ENCODE measurements at regions of chr7 and their contacts with region 1.

Region 1: DNA sequence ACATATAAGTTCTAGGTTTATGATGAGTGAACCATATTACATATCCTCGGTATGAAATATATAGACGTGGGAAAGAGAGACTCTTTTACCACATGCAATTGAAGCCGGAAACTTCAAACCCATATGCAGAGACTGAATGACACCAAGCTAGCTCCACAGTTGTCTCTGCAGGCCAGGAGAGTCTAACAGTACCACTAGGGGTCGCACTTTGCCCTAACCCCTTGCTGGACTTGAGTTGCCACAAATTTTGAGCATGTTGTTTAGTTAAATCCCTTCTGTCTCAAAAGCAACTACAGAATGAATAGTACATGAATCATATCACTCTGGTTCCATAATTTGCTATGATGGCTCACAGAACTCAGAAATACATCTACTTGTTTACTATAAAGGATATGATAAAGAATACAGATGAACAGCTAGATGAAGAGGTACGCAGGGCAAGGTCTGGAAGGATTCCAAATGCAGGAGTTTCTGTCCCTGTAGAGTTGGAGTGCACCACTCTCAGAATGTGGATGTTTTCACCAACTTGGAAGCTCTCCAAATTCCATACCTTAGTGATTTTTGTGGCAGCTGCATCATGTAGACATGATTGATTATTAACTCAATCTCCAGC is 112.4 kb upstream of the YAE1 start:
- DNase-seq: peak; percentile 62
- H3K4me3 Mint-ChIP-seq: no peak overlapping the region
- H3K27ac Mint-ChIP-seq: no peak overlapping the region
- H3K4me1 Mint-ChIP-seq: no peaks in the 10 kb centered on the region
- H3K27me3 Mint-ChIP-seq: peaks cover 11% of the 10 kb centered on the region

Region 2: DNA sequence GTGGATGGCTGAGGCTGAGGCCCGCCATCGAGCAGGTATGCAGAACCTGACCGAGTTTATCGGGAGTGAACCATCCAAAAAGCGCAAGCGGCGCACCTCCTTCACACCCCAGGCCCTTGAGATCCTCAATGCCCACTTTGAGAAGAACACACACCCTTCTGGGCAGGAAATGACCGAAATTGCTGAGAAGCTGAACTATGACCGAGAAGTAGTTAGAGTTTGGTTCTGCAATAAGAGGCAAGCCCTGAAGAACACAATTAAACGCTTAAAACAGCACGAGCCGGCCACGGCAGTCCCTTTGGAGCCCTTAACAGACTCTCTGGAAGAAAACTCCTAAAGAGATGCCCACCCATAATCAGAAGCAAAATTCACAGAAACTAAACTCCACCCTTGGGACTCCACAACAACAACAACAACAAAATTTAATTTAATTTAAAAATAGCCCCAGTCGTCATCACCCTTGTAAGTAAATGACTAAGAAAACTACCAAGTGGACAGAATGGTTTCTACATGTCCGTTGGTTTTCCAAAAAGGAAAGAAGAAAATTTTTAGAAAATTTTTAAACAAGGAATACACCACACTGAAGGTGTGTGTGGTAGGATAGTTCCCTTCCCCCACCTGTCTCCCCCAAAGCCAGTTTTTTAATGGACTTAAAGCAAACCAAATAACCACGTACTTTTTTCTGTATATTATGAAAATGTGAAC is 10.7 kb after region 1 on chr7:
- CTCF ChIA-PET with region 1: interaction called, 22 read pairs
- POLR2A ChIA-PET with region 1: interaction called, 3 read pairs
- DNase-seq: no peak
- H3K4me3 Mint-ChIP-seq: no peak overlapping the region
- H3K27ac Mint-ChIP-seq: no peak overlapping the region
- H3K4me1 Mint-ChIP-seq: peaks cover 8% of the 10 kb centered on the region
- H3K27me3 Mint-ChIP-seq: peaks cover 35% of the 10 kb centered on the region

Region 3: DNA sequence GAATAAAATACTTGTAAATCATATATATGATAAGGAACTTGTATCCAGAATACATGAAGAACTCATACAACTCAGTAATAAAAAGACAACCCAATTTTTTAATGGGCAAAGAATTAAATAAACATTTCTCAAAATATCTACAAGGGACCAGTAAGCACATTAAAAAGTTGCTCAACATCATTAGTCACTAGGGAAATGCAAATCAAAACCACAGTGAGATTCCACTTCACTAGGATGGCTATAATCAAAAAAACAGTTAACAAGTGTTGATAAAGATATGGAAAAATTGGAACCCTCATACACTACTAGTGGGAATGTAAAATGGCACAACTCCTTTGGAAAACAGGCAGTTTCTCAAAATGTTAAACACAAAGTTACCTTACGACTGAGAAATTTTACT is 72.1 kb after region 1 on chr7:
- CTCF ChIA-PET with region 1: interaction called, 24 read pairs
- POLR2A ChIA-PET with region 1: no interaction called
- DNase-seq: no peak
- H3K4me3 Mint-ChIP-seq: no peak overlapping the region
- H3K27ac Mint-ChIP-seq: no peak overlapping the region
- H3K4me1 Mint-ChIP-seq: no peaks in the 10 kb centered on the region
- H3K27me3 Mint-ChIP-seq: peaks cover 17% of the 10 kb centered on the region

Region 4: GRCh38 chr7:39536951-39537350 is 83.1 kb after region 1 on chr7:
- CTCF ChIA-PET with region 1: no interaction called
- POLR2A ChIA-PET with region 1: no interaction called
- DNase-seq: no peak
- H3K4me3 Mint-ChIP-seq: no peak overlapping the region
- H3K27ac Mint-ChIP-seq: no peak overlapping the region
- H3K4me1 Mint-ChIP-seq: no peaks in the 10 kb centered on the region
- H3K27me3 Mint-ChIP-seq: peaks cover 3% of the 10 kb centered on the region